ENCODE measurements at regions of chr13 and their contacts with region 1.

Region 1: DNA sequence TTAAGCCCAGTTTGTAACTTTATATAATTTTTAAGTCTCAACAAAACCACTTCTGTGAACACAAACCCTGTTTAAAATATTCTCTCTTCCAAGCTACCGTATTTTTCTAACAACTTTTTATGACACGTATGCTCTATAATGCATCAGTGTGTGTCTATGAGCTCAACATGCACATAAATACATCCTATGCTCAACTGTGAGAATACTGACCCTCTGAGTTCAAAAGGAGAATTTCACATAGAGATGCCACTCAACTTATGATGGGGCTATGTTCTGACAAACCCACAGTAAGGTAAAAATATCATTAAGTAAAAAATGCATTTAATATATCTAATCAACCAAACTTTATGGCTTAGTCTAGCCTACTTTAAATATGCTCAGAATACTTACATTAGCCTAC is 1139.7 kb upstream of the SPRY2 start:
- DNase-seq: peak; percentile 7
- ATAC-seq: peak; percentile 67
- H3K4me3 ChIP-seq: no peak overlapping the region
- H3K27ac ChIP-seq: no peak overlapping the region
- H3K4me1 ChIP-seq: no peaks in the 10 kb centered on the region
- H3K27me3 ChIP-seq: no peaks in the 10 kb centered on the region
- CTCF ChIP-seq: peak; percentile 30; the same call in 1 of the 2 replicates

Region 2: GRCh38 chr13:81171065-81171647 is 309.5 kb before region 1 on chr13:
- CTCF ChIA-PET with region 1: interaction called, 11 read pairs
- POLR2A ChIA-PET with region 1: no interaction called
- intact Hi-C with region 1: loop called (anchors 1 kb)
- DNase-seq: peak; percentile 54
- ATAC-seq: peak; percentile 42; the same call in 1 of the 2 replicates
- H3K4me3 ChIP-seq: no peak overlapping the region
- H3K27ac ChIP-seq: no peak overlapping the region
- H3K4me1 ChIP-seq: no peaks in the 10 kb centered on the region
- H3K27me3 ChIP-seq: no peaks in the 10 kb centered on the region
- CTCF ChIP-seq: peak; percentile 67

Region 3: GRCh38 chr13:82136880-82137279 is 656.2 kb after region 1 on chr13:
- CTCF ChIA-PET with region 1: no interaction called
- POLR2A ChIA-PET with region 1: no interaction called
- intact Hi-C with region 1: no loop called
- DNase-seq: peak; percentile 20
- ATAC-seq: peak; percentile 60
- H3K4me3 ChIP-seq: no peak overlapping the region
- H3K27ac ChIP-seq: no peak overlapping the region
- H3K4me1 ChIP-seq: no peaks in the 10 kb centered on the region
- H3K27me3 ChIP-seq: no peaks in the 10 kb centered on the region
- CTCF ChIP-seq: no peak